Common myeloid progenitor, CD34-positive (primary cell): ENCODE measurements at regions of chr16 and their contacts with region 1.

Region 1: GRCh38 chr16:17474077-17474476 is 3.3 kb upstream of the XYLT1 start:
- DNase-seq: peak; percentile 93 to 98 (median 97)
- H3K4me3 ChIP-seq: peak overlapping the region; percentile 16 to 79 (median 60)
- H3K27ac ChIP-seq: peak overlapping the region; percentile 73 to 86
- H3K4me1 ChIP-seq: peaks cover 10 to 74% (median 61%) of the 10 kb centered on the region in 4 experiments
- H3K27me3 ChIP-seq: no peaks in the 10 kb centered on the region

Region 2: GRCh38 chr16:17432901-17433576 is 41.0 kb before region 1 on chr16:
- CTCF ChIA-PET with region 1: no interaction called
- POLR2A ChIA-PET with region 1: no interaction called
- DNase-seq: no peak
- H3K4me3 ChIP-seq: no peak overlapping the region
- H3K27ac ChIP-seq: no peak overlapping the region
- H3K4me1 ChIP-seq: peaks cover 2 to 7% (median 5%) of the 10 kb centered on the region in 4 experiments
- H3K27me3 ChIP-seq: no peaks in the 10 kb centered on the region

Region 3: DNA sequence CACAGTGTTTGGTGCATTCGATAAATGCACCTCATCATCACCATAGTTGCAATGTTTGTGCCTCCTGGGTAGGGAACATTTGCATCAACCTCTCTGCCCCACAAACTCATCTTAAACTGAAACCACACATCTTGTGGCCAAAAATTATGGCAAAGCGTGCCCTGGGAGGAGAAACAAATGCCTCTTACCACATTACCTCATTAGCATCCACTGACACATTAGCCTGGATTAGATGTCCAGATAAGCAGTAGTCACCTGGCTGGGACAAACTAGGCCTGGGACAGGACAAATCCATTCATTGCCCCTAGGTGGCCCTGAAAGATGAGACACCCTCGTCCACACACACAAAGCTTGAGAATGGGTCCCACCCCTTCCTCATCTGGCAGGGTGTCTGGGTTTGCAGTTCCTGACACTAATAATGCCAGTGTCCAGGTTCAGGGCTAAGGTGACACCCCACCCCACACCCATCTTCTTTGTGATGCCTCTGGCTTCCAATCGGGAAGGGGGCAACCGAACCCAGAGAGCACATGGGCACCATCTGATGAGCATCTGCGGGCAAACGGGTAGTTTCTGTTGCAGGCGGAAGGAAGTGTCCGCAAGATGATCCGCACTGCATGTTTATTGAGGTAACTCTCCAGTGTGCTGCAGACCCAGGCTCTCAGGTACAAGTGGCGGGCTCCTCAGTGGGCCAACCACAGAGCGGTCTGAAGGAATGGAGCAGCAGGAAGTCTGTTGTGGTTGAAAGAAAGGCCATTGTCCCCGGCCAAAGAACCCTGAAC is 11.9 kb before region 1 on chr16:
- CTCF ChIA-PET with region 1: interaction called, 15 read pairs
- POLR2A ChIA-PET with region 1: no interaction called
- DNase-seq: peak; percentile 71 to 98 (median 96)
- H3K4me3 ChIP-seq: peak overlapping the region in 1 of 7 experiments; percentile 17
- H3K27ac ChIP-seq: peak overlapping the region; percentile 30 to 31
- H3K4me1 ChIP-seq: peaks cover 14 to 66% (median 47%) of the 10 kb centered on the region in 4 experiments
- H3K27me3 ChIP-seq: no peaks in the 10 kb centered on the region